ENCODE measurements at regions of chr20 and their contacts with region 1.

Region 1: DNA sequence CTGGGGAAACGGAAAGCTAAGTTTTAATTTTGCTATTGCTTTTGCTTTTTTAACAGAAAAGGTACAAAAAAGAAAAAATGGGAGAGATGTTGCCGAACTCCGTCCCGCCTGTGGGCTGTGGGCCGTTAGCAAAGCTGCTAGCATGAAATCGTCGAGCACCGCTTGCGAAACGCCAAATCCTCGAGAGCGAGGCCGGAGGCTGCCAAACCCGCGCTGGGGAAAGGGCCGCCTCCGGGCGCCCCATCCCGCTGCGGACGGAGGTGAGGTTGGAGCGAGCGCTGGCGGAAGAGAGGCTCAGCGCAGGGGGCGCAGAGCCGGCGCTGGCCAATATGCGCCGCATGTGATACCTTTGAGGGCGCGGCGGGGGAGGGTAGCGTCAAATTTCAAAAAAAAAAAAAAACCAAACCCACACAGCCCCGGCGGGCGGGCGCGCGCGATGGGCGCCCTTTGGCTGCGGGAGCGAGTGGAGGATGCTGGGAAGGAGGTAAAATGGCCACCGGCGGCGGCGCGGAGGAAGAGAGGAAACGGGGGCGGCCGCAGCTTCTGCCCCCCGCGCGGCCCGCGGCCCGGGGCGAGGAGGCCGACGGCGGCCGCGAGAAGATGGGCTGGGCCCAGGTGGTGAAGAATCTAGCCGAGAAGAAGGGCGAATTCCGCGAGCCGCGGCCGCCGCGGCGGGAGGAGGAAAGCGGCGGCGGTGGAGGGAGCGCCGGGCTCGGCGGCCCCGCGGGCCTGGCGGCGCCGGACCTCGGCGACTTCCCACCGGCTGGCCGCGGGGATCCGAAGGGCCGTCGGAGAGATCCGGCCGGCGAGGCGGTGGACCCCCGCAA is at the start of gene ZCCHC3:
- DNase-seq: peak; percentile 95
- ATAC-seq: peak; percentile 96
- total RNA-seq, gene ZCCHC3: 11.0 TPM

Region 2: GRCh38 chr20:309841-310644 is 12.7 kb after region 1 on chr20:
- intact Hi-C with region 1: loop called (anchors 2 kb)
- DNase-seq: peak; percentile 98
- ATAC-seq: peak; percentile 100

Region 3: DNA sequence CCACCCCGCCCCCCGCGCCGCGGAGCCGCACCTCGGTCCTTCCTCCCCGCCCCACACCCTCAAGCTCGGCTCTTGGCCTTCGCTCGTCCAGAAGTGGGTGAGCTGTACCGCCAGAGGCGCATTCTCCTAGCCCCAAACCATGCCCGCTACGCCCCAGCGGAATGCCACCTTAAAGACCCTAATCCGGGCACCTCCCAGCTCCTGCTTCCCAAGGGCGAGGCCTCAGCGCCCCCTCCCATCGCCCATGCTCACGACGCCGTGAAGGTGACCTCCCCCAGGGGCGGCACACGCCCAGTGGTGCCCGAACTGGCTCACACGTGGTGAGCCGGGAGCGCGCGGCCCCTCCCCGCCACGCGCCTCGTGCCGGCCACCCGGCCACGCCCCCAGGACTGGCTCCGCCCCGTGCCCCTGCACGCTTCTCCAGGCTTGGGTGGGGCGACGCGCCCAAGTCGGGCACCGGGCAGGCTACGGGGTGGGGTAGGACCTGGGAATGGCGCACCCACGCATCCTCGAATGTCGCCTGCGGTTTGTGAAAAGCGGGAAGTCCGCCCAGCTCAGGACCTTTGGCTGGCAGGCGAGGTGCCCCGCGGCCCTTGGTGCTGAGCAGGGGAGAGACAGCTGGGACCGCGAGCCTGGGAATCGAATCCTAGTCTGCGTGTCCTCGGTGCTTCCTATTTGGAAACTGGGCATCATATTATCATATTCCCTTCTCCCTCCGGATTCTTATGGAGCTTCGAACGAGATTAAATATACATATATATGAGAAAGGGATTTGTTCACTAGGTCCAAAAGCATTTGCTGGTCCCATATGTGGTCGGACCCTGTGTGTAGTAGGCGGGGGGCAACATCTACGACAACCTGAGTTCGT is 27.1 kb after region 1 on chr20:
- intact Hi-C with region 1: loop called (anchors 1 kb)
- DNase-seq: peak; percentile 94
- ATAC-seq: peak; percentile 79